ENCODE measurements at regions of chr11 and their contacts with region 1.

Region 1: GRCh38 chr11:19890308-19890707 is 177.7 kb downstream of the NAV2 start:
- DNase-seq: no peak
- CTCF ChIP-seq: no peak

Region 2: GRCh38 chr11:19071255-19071654 is 819.1 kb before region 1 on chr11:
- in situ Hi-C with region 1: loop called (anchors 25 kb)
- DNase-seq: peak; percentile 79
- CTCF ChIP-seq: peak; percentile 95

Region 3: DNA sequence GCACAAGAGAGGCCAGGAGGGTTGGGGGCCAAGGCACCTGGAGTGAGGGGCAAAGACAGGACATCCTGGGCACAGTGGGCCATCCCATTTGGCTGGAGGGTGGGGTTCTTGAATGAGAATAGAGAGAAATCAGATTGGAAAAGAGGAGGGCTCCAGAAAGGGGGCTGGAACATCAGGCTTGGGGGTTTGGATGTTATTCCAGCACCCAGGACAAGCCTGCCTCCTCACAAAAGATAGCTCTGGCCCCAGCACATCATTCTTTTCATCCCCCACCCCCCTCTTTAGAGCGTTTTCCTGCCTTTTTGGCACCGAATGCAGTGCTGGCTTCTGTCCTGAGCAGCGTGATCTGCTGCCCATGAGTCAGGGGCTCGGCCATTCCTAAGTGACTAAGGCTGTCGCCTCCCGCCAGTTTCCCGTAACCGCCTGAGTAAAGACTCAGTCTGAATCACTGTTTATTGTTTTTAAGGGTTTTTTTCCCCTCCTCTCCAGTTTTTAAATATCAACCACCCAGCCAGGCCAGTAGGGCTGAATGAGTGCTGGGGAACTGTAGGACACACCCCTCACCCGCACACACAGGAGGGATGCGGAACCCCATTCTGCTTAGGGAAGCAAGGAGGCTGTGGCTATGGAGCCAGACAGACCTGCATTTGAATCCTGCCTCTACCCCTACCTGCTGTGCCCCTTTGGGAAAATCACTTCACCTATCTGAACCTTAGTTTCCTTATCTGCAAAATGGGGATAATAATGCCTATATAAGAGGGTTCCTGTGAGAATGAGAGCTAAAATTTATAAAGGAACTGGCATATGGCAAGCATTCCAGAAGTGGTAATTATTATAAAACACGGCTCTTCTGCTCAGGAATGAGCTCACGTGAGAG is 210.1 kb before region 1 on chr11:
- in situ Hi-C with region 1: no loop called
- DNase-seq: no peak
- CTCF ChIP-seq: no peak

Region 4: GRCh38 chr11:20042118-20042518 is 151.8 kb after region 1 on chr11:
- in situ Hi-C with region 1: no loop called
- DNase-seq: no peak
- CTCF ChIP-seq: no peak

Region 5: DNA sequence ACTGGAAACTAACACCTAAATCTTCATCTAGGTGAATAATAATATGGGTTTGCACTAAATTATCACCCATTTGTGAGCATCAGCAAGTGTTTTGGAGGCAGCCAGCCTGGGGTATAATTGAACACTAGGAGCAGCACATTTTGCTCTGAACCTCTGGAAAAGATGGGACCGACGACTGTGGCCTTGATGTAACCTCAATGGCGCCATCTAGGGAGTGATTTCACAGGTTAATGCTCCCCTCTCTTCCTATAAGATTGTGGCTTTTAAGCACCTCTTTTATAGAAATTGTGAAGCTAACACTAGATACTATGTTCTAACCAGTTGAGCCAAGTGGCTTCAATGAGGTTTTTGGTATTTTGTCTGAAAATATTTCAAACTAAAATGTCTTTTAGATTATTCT is 982.7 kb after region 1 on chr11:
- in situ Hi-C with region 1: no loop called
- DNase-seq: peak; percentile 24
- CTCF ChIP-seq: peak; percentile 12